Heart left ventricle (tissue), 16 donors: ENCODE measurements at regions of chrX and their contacts with region 1.

Region 1: GRCh38 chrX:54182864-54183608 is at the start of gene FAM120C:
- DNase-seq: peak; percentile 71 to 82 (median 78)
- ATAC-seq: peak; percentile 81 to 94 (median 91)
- H3K4me3 ChIP-seq: peak within 1 kb of the TSS; percentile 64 to 99 (median 82)
- H3K27ac ChIP-seq: peak within 1 kb of the TSS; percentile 78 to 94 (median 87)
- H3K4me1 ChIP-seq: peaks cover 0 to 38% (median 16%) of the 10 kb centered on the region in 12 donors
- H3K27me3 ChIP-seq: peaks cover 0 to 4% (median 0%) of the 10 kb centered on the region in 9 donors
- CTCF ChIP-seq: no peak
- POLR2A ChIP-seq: no peak
- total RNA-seq, gene FAM120C: 3.4 to 8.8 (median 5.9) TPM

Region 2: DNA sequence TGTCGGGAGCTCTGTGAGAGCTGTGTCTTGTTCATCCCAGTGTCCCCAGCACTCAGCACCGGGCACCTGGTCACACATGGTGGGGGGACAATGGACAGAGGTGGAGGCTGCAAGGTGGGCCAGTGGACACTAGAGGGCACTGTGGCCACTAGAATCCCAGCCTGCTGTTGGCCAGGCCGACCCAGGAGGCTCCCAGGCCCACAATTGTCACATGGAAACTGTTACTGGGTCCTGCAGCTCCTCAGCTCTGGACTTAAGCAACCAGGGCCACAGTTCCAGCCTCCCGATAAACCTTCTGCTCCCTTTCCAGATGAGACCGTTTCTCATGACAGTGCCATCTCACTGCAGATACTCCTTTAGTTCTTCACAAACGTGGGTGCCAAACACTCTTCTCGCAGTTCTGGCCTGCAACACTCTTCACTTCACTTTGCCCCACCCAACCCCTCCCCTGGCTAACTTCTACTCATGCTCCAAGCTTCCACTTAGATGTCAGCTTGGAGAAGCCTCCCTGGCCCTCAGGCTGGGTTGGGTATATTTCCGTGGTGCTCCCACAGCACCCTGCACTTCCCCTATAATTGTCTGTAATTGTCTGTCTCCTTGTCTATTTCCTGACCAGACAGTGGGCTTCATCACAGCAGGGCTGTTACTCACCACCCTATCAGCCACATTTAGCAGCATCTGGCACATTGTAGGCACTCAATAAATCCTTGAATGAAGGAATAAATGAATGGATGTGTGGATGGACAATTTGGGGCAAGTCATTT is 898.2 kb before region 1 on chrX:
- intact Hi-C with region 1: no loop called
- DNase-seq: peak; percentile 34 to 74 (median 62)
- ATAC-seq: peak in 3 of 4 donors; percentile 41 to 48 (median 42)
- H3K4me3 ChIP-seq: no peak overlapping the region
- H3K27ac ChIP-seq: peak overlapping the region in 3 of 12 donors; percentile 8 to 16 (median 13)
- H3K4me1 ChIP-seq: peaks cover 0 to 61% (median 22%) of the 10 kb centered on the region in 12 donors
- H3K27me3 ChIP-seq: peaks cover 0 to 35% (median 0%) of the 10 kb centered on the region in 9 donors
- CTCF ChIP-seq: peak; percentile 62 to 91 (median 72)
- POLR2A ChIP-seq: no peak

Region 3: GRCh38 chrX:53683556-53684414 is 499.3 kb before region 1 on chrX:
- intact Hi-C with region 1: loop called in 1 of 10 experiments (anchors 5 kb)
- DNase-seq: peak; percentile 91 to 94 (median 92)
- ATAC-seq: peak; percentile 86 to 93 (median 92)
- H3K4me3 ChIP-seq: peak overlapping the region; percentile 29 to 96 (median 68)
- H3K27ac ChIP-seq: peak overlapping the region; percentile 73 to 93 (median 88)
- H3K4me1 ChIP-seq: peaks cover 0 to 31% (median 7%) of the 10 kb centered on the region in 12 donors
- H3K27me3 ChIP-seq: no peaks in the 10 kb centered on the region
- CTCF ChIP-seq: peak in 1 of 12 donors; percentile 12
- POLR2A ChIP-seq: peak in 1 of 2 donors; percentile 70

Region 4: GRCh38 chrX:54999717-55000598 is 816.9 kb after region 1 on chrX and contains the start of gene APEX2:
- intact Hi-C with region 1: loop called in 1 of 10 experiments (anchors 5 kb)
- DNase-seq: peak; percentile 89 to 94 (median 94)
- ATAC-seq: peak; percentile 97 to 98 (median 98)
- H3K4me3 ChIP-seq: peak within 1 kb of the TSS; percentile 19 to 95 (median 66)
- H3K27ac ChIP-seq: peak within 1 kb of the TSS; percentile 68 to 95 (median 86)
- H3K4me1 ChIP-seq: peaks cover 0 to 17% (median 4%) of the 10 kb centered on the region in 12 donors
- H3K27me3 ChIP-seq: no peaks in the 10 kb centered on the region
- CTCF ChIP-seq: no peak
- POLR2A ChIP-seq: peak in 1 of 2 donors; percentile 70
- total RNA-seq, gene APEX2: 6.8 to 12.4 (median 8.6) TPM